Naive thymus-derived CD4-positive, alpha-beta T cell (primary cell): ENCODE measurements at regions of chr3 and their contacts with region 1.

Region 1: GRCh38 chr3:124834723-124835718 is 52.1 kb downstream of the ITGB5 start:
- DNase-seq: peak in 8 of 9 donors; percentile 18 to 58 (median 41)
- ATAC-seq: peak; percentile 86
- H3K4me3 ChIP-seq: peak overlapping the region; percentile 46
- H3K4me3 Mint-ChIP-seq: peak overlapping the region; percentile 82 to 93 (median 86)
- H3K27ac ChIP-seq: no peak overlapping the region
- H3K27ac Mint-ChIP-seq: peak overlapping the region; percentile 39 to 89 (median 77)
- H3K4me1 ChIP-seq: peaks cover 6 to 9% of the 10 kb centered on the region in 2 donors
- H3K4me1 Mint-ChIP-seq: peaks cover 13 to 21% (median 17%) of the 10 kb centered on the region in 7 donors
- H3K27me3 ChIP-seq: no peaks in the 10 kb centered on the region
- H3K27me3 Mint-ChIP-seq: peaks cover 2 to 49% (median 12%) of the 10 kb centered on the region in 5 donors

Region 2: DNA sequence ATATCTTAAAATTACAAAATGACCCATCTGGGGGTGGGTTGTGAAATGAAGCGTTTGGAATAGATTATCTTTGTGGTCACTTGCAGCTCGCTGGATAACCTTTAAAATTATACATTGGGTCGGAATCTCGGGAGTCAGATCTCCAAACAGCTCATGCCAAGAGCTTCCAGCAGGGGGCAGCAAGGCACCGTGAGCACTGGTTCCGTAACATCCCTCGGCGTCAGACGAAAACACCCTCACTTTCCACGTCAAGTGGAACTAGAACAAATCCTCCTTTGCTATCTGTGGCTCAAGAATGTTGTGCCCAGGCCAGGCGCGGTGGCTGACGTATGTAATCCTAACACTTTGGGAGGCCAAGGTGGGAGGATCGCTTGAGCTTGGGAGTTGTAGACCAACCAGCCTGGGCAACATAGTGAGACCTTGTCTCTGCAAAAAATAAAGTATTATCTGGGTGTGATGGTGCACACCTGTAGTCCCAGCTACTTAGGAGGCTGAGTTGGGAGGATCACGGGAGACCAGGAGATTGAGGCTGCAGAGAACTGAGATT is 73.7 kb before region 1 on chr3:
- CTCF ChIA-PET with region 1: interaction called, 3 read pairs
- POLR2A ChIA-PET with region 1: no interaction called
- intact Hi-C with region 1: loop called in 1 of 2 experiments (anchors 1 kb)
- DNase-seq: peak; percentile 52 to 76 (median 68)
- ATAC-seq: peak; percentile 92
- H3K4me3 ChIP-seq: no peak overlapping the region
- H3K4me3 Mint-ChIP-seq: peak overlapping the region in 9 of 10 donors; percentile 16 to 84 (median 72)
- H3K27ac ChIP-seq: no peak overlapping the region
- H3K27ac Mint-ChIP-seq: peak overlapping the region in 3 of 9 donors; percentile 5 to 92 (median 65)
- H3K4me1 ChIP-seq: no peaks in the 10 kb centered on the region
- H3K4me1 Mint-ChIP-seq: peaks cover 0 to 7% (median 5%) of the 10 kb centered on the region in 7 donors
- H3K27me3 ChIP-seq: no peaks in the 10 kb centered on the region
- H3K27me3 Mint-ChIP-seq: peaks cover 0 to 1% (median 0%) of the 10 kb centered on the region in 5 donors

Region 3: DNA sequence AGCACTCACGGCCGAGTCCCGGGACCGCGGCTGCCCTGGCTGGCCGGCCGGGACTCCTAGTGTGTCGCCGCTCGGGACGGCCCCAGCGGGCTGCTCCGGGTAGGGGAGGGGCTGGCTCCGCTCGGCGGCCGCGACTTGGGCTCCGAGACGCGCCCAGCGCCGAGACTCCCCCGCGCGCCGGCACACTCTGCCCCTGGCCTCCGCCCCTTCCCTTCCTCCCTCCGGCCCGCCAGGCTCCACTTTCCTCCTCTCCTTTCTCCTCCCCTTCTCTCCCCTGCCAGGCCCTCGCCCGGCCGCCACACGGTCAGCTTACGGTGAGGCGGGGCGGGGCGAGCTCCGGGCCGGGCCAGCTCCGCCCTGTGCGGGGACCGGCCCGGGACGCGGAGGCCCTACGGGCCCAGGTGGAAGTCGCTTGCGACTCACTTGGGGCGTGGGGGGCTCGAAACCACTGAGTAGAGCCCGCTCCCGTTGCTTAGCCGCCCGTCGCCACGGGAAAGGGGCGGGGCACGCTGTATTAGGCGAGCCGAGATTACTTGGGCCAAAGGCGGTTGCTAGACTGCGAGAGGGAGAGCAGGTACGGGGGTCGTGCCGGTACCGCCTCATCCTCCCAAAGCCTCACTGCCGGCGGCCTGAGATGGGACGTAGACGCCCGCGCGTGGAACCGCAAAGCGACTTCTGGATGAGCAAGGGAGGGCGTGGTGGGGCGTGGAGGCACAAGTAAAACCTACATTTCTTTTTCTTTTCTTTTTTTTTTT is 52.3 kb after region 1 on chr3 and contains the start of gene ITGB5:
- CTCF ChIA-PET with region 1: no interaction called
- POLR2A ChIA-PET with region 1: interaction called, 4 read pairs
- intact Hi-C with region 1: loop called in 1 of 2 experiments (anchors 5 kb)
- DNase-seq: peak in 6 of 9 donors; percentile 1 to 54 (median 12)
- ATAC-seq: peak; percentile 71
- H3K4me3 ChIP-seq: peak within 1 kb of the TSS; percentile 41
- H3K4me3 Mint-ChIP-seq: peak within 1 kb of the TSS; percentile 59 to 79 (median 76)
- H3K27ac ChIP-seq: no peak within 1 kb of the TSS
- H3K27ac Mint-ChIP-seq: peak within 1 kb of the TSS in 1 of 9 donors; percentile 17
- H3K4me1 ChIP-seq: no peaks in the 10 kb centered on the region
- H3K4me1 Mint-ChIP-seq: peaks cover 0 to 11% (median 7%) of the 10 kb centered on the region in 7 donors
- H3K27me3 ChIP-seq: peaks cover 0 to 5% of the 10 kb centered on the region in 2 donors
- H3K27me3 Mint-ChIP-seq: peaks cover 50 to 66% (median 62%) of the 10 kb centered on the region in 5 donors
- total RNA-seq, gene ITGB5: 0.29 to 3.5 (median 2.5) TPM in 4 of 5 experiments, not detected in the other